Activated CD8-positive, alpha-beta T cell treated with anti-CD3 and anti-CD28 coated beads, Interleukin-2, amount 10 ng/mL, durations not matched to agents 7 days and 5 days (primary cell): ENCODE measurements at regions of chr3 and their contacts with region 1.

Region 1: GRCh38 chr3:122679085-122679881 is 1.4 kb upstream of the PARP14 start:
- DNase-seq: peak; percentile 92
- ATAC-seq: peak; percentile 64
- H3K4me3 Mint-ChIP-seq: peak overlapping the region; percentile 94
- H3K27ac Mint-ChIP-seq: peak overlapping the region; percentile 94
- H3K4me1 Mint-ChIP-seq: peaks cover 56% of the 10 kb centered on the region
- H3K27me3 Mint-ChIP-seq: no peaks in the 10 kb centered on the region

Region 2: DNA sequence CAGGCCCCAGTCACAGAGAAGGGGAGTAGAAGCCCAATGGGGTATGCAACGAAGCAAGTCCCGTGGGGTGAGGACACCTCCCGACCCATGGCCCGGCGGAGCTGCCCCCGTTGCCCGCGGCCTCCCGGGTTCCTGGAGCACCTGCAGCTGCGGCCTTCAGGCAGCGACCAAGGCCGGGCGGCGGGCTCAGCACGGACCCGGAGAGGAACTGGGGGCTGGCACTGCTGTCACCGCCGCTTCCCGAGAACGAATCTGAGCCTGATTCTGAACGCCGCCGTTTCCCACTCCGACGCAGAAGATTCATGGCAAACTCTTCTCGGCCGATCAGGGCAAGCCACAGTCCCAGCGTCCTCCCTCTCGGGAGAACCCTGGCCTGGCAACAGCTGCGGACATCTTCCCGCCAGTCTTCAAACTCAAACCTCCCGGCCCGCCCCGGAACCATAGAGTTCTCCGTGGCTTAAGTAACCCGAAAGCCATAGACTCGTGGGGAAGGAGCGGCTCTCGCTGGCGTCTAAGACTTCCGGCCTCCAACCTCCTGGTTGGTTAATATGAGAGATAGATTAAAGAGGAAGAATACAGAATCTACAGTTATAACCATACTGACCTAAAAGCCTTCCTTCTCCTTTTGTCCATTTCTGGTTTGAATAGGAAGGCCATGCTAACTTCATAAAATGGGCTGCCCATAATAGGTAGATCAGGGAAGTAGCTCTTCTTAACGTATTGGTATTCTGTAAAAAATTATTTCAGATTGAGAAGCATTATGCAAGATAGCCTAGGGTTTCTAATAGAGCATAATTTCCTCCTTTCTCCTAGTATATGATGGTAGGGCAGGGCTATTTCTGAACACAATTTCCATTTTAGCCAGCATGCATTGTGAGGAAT is 1133.5 kb before region 1 on chr3 and contains the start of gene POLQ:
- CTCF ChIA-PET with region 1: interaction called, 17 read pairs
- POLR2A ChIA-PET with region 1: no interaction called
- DNase-seq: peak; percentile 94
- ATAC-seq: peak; percentile 95
- H3K4me3 Mint-ChIP-seq: peak within 1 kb of the TSS; percentile 85
- H3K27ac Mint-ChIP-seq: peak within 1 kb of the TSS; percentile 90
- H3K4me1 Mint-ChIP-seq: peaks cover 27% of the 10 kb centered on the region
- H3K27me3 Mint-ChIP-seq: no peaks in the 10 kb centered on the region
- total RNA-seq, gene POLQ: 35.5 to 35.6 TPM

Region 3: GRCh38 chr3:122271246-122271898 is 407.9 kb before region 1 on chr3:
- CTCF ChIA-PET with region 1: no interaction called
- POLR2A ChIA-PET with region 1: no interaction called
- DNase-seq: peak; percentile 54
- ATAC-seq: peak; percentile 86
- H3K4me3 Mint-ChIP-seq: peak overlapping the region; percentile 1
- H3K27ac Mint-ChIP-seq: peak overlapping the region; percentile 2
- H3K4me1 Mint-ChIP-seq: peaks cover 34% of the 10 kb centered on the region
- H3K27me3 Mint-ChIP-seq: peaks cover 3% of the 10 kb centered on the region

Region 4: DNA sequence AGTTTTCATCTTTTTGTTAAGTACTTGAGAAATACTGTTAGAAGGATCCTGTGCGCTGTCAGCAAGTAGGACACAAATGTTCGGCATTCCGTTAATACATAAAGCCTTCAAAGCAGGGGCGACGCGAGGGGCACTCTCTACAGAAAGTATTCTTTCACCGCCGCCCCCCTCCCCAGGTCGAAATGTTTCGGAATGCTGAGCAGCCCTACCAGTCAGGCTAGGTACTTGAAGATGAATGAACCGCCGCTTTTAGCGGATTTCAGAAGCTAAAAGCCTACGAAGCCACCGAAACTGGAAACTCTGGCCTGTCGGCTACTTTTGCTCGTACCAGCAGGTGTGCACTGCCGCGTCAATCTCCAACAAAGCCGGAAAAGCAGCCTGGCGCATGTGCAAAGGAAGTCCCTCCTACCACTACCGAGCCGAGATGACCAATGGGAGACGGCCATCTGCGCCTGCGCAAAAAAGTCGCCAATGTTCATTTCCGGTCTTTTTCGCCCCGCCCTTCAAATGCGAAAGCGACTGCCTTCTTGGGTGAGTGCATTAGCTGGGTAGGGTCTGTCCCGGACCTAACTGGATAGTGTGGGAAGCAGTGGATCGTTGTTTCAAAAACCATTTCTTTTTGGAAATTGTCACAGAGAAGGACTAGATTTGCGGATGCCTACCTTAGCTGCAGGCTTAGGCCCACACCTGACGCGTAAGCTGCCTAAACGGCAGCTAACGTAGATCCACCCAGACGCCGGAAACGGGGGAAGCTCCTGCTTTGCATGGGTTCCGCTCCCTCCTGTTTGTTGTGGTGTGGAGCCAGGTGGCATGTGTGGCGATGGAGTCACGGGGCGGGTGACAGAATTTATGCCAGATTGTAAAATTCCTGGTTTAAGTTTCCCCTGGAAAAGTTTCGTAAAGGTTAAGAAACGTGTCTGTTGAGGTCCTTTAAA is 263.3 kb before region 1 on chr3 and contains the start of gene WDR5B:
- CTCF ChIA-PET with region 1: interaction called, 22 read pairs
- POLR2A ChIA-PET with region 1: interaction called, 22 read pairs
- DNase-seq: peak; percentile 99
- ATAC-seq: peak; percentile 94
- H3K4me3 Mint-ChIP-seq: peak within 1 kb of the TSS; percentile 96
- H3K27ac Mint-ChIP-seq: peak within 1 kb of the TSS; percentile 99
- H3K4me1 Mint-ChIP-seq: peaks cover 51% of the 10 kb centered on the region
- H3K27me3 Mint-ChIP-seq: no peaks in the 10 kb centered on the region
- total RNA-seq, gene WDR5B: 4.5 to 5.1 TPM

Region 5: GRCh38 chr3:122555275-122556071 is 123.8 kb before region 1 on chr3:
- CTCF ChIA-PET with region 1: interaction called, 248 read pairs
- POLR2A ChIA-PET with region 1: interaction called, 12 read pairs
- DNase-seq: no peak
- ATAC-seq: no peak
- H3K4me3 Mint-ChIP-seq: no peak overlapping the region
- H3K27ac Mint-ChIP-seq: no peak overlapping the region
- H3K4me1 Mint-ChIP-seq: peaks cover 30% of the 10 kb centered on the region
- H3K27me3 Mint-ChIP-seq: no peaks in the 10 kb centered on the region

Region 6: GRCh38 chr3:122578069-122578740 is 101.1 kb before region 1 on chr3:
- CTCF ChIA-PET with region 1: interaction called, 21 read pairs
- POLR2A ChIA-PET with region 1: interaction called, 3 read pairs
- DNase-seq: no peak
- ATAC-seq: no peak
- H3K4me3 Mint-ChIP-seq: peak overlapping the region; percentile 100
- H3K27ac Mint-ChIP-seq: peak overlapping the region; percentile 99
- H3K4me1 Mint-ChIP-seq: peaks cover 42% of the 10 kb centered on the region
- H3K27me3 Mint-ChIP-seq: no peaks in the 10 kb centered on the region

Region 7: GRCh38 chr3:122668930-122669730 is 10.2 kb before region 1 on chr3:
- CTCF ChIA-PET with region 1: interaction called, 20 read pairs
- POLR2A ChIA-PET with region 1: interaction called, 14 read pairs
- DNase-seq: no peak
- ATAC-seq: peak; percentile 61
- H3K4me3 Mint-ChIP-seq: no peak overlapping the region
- H3K27ac Mint-ChIP-seq: no peak overlapping the region
- H3K4me1 Mint-ChIP-seq: peaks cover 13% of the 10 kb centered on the region
- H3K27me3 Mint-ChIP-seq: peaks cover 2% of the 10 kb centered on the region

Region 8: GRCh38 chr3:122730240-122730639 is 51.0 kb after region 1 on chr3:
- CTCF ChIA-PET with region 1: no interaction called
- POLR2A ChIA-PET with region 1: no interaction called
- DNase-seq: no peak
- ATAC-seq: no peak
- H3K4me3 Mint-ChIP-seq: no peak overlapping the region
- H3K27ac Mint-ChIP-seq: no peak overlapping the region
- H3K4me1 Mint-ChIP-seq: no peaks in the 10 kb centered on the region
- H3K27me3 Mint-ChIP-seq: no peaks in the 10 kb centered on the region

Region 9: GRCh38 chr3:122745346-122746021 is 66.2 kb after region 1 on chr3:
- CTCF ChIA-PET with region 1: no interaction called
- POLR2A ChIA-PET with region 1: no interaction called
- DNase-seq: no peak
- ATAC-seq: no peak
- H3K4me3 Mint-ChIP-seq: no peak overlapping the region
- H3K27ac Mint-ChIP-seq: no peak overlapping the region
- H3K4me1 Mint-ChIP-seq: peaks cover 2% of the 10 kb centered on the region
- H3K27me3 Mint-ChIP-seq: no peaks in the 10 kb centered on the region

Region 10: GRCh38 chr3:122858373-122858772 is 179.1 kb after region 1 on chr3:
- CTCF ChIA-PET with region 1: no interaction called
- POLR2A ChIA-PET with region 1: no interaction called
- DNase-seq: no peak
- ATAC-seq: no peak
- H3K4me3 Mint-ChIP-seq: no peak overlapping the region
- H3K27ac Mint-ChIP-seq: no peak overlapping the region
- H3K4me1 Mint-ChIP-seq: no peaks in the 10 kb centered on the region
- H3K27me3 Mint-ChIP-seq: no peaks in the 10 kb centered on the region